Activated naive CD8-positive, alpha-beta T cell treated with anti-CD3 and anti-CD28 coated beads, Interleukin-2, amount 10 ng/mL, durations not matched to agents 7 days and 5 days (primary cell): ENCODE measurements at regions of chr11 and their contacts with region 1.

Region 1: DNA sequence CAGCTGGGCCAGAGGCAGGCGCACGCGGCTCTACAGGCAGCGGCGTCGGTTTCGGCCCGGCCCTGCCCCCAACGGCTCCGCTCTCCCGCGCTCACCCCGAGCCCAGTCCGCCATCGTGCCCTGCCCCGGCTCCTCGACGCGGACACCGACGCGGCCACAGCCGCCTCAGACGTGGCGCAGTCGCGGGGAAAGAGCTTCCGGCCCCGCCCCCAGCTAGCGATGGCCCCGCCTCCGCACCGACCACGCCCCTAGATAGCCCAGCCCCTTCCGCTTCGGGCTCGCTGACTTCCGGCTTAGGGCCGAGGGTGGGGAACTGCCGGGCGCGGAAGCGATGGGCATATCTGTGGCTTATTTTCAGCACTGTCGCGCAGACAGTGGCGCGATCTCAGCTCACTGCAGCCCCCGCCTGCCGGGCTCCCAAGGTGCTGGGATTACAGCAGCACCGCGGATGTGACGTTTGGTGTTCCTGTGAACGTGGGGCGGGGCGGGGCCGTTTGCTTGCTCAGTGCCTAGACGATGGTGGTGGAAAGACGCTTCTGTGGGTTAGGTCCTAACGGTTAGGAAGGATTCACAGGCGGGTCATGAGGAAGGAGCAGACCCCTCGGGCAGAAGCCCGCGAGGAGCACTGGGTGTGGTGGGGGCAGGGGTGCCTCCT is at the starts of genes BET1L and RIC8A:
- DNase-seq: peak; percentile 98
- ATAC-seq: peak; percentile 81
- H3K4me3 Mint-ChIP-seq: peak within 1 kb of the TSS; percentile 89
- H3K27ac Mint-ChIP-seq: peak within 1 kb of the TSS; percentile 97
- H3K4me1 Mint-ChIP-seq: peaks cover 35% of the 10 kb centered on the region
- H3K27me3 Mint-ChIP-seq: no peaks in the 10 kb centered on the region
- total RNA-seq, gene BET1L: 56.9 to 61.9 TPM
- total RNA-seq, gene RIC8A: 102 to 111 TPM

Region 2: GRCh38 chr11:236774-237767 is 29.7 kb after region 1 on chr11 and contains the start of gene PSMD13:
- POLR2A ChIA-PET with region 1: interaction called, 44 read pairs
- DNase-seq: peak; percentile 92
- ATAC-seq: peak; percentile 85
- H3K4me3 Mint-ChIP-seq: peak within 1 kb of the TSS; percentile 98
- H3K27ac Mint-ChIP-seq: peak within 1 kb of the TSS; percentile 98
- H3K4me1 Mint-ChIP-seq: peaks cover 39% of the 10 kb centered on the region
- H3K27me3 Mint-ChIP-seq: no peaks in the 10 kb centered on the region
- total RNA-seq, gene PSMD13: 130 to 131 TPM

Region 3: GRCh38 chr11:279966-280582 is 72.7 kb after region 1 on chr11:
- POLR2A ChIA-PET with region 1: interaction called, 25 read pairs
- DNase-seq: peak; percentile 69
- ATAC-seq: peak; percentile 31
- H3K4me3 Mint-ChIP-seq: peak overlapping the region; percentile 89
- H3K27ac Mint-ChIP-seq: peak overlapping the region; percentile 95
- H3K4me1 Mint-ChIP-seq: peaks cover 32% of the 10 kb centered on the region
- H3K27me3 Mint-ChIP-seq: no peaks in the 10 kb centered on the region

Region 4: GRCh38 chr11:304915-305843 is 97.8 kb after region 1 on chr11:
- POLR2A ChIA-PET with region 1: interaction called, 19 read pairs
- DNase-seq: peak; percentile 63
- ATAC-seq: no peak
- H3K4me3 Mint-ChIP-seq: no peak overlapping the region
- H3K27ac Mint-ChIP-seq: peak overlapping the region; percentile 28
- H3K4me1 Mint-ChIP-seq: peaks cover 44% of the 10 kb centered on the region
- H3K27me3 Mint-ChIP-seq: peaks cover 7% of the 10 kb centered on the region

Region 5: DNA sequence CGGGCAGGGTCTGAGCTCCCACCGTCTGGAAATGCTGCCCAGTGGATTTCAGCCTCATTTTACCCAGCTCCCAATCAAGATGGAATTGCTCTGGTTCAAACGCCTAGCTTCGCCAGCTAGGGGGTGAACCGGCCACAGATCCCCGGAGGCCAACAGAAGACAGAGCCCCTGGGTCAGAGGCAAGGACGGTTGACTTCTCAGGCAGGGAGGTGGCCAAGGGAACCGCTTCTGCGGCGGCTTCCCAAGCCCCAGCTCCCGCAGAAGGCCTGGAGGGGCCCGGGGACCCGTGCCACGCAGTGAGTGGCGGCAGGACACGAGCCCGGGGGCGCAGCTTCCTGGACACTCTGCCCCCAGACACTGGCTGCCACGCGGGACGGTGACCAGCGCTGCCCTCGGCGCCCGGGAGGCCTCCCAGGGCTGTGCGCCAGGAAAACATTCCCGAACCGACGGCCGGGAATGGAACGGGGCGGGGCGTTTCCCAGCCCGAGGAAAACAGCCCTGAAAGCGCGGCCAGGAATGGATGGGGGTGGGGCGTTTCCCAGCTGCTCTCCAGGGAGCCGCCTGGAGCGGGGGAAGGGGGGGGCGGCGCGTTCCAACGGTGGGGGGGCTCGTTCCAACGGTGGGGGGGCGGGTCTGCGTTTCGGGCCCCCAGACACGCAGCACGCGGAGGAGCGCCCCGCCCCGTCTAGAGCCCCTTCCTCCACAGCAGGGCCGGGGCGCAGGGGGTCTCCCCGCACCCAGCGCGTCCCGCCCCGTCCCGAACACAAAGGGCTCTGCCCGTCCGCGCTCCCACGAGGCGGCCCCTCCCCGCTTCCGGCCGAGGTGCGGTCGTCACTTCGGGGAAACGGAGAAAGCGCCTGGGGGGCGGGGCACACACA is 148.5 kb after region 1 on chr11:
- POLR2A ChIA-PET with region 1: interaction called, 21 read pairs
- DNase-seq: peak; percentile 94
- ATAC-seq: peak; percentile 74
- H3K4me3 Mint-ChIP-seq: peak overlapping the region; percentile 89
- H3K27ac Mint-ChIP-seq: peak overlapping the region; percentile 92
- H3K4me1 Mint-ChIP-seq: peaks cover 39% of the 10 kb centered on the region
- H3K27me3 Mint-ChIP-seq: peaks cover 5% of the 10 kb centered on the region

Region 6: GRCh38 chr11:416757-417621 is 209.7 kb after region 1 on chr11:
- POLR2A ChIA-PET with region 1: interaction called, 11 read pairs
- DNase-seq: peak; percentile 82
- ATAC-seq: peak; percentile 46
- H3K4me3 Mint-ChIP-seq: peak overlapping the region; percentile 97
- H3K27ac Mint-ChIP-seq: peak overlapping the region; percentile 86
- H3K4me1 Mint-ChIP-seq: peaks cover 15% of the 10 kb centered on the region
- H3K27me3 Mint-ChIP-seq: no peaks in the 10 kb centered on the region